PC-9 (cell line): ENCODE measurements at regions of chr20 and their contacts with region 1.

Region 1: DNA sequence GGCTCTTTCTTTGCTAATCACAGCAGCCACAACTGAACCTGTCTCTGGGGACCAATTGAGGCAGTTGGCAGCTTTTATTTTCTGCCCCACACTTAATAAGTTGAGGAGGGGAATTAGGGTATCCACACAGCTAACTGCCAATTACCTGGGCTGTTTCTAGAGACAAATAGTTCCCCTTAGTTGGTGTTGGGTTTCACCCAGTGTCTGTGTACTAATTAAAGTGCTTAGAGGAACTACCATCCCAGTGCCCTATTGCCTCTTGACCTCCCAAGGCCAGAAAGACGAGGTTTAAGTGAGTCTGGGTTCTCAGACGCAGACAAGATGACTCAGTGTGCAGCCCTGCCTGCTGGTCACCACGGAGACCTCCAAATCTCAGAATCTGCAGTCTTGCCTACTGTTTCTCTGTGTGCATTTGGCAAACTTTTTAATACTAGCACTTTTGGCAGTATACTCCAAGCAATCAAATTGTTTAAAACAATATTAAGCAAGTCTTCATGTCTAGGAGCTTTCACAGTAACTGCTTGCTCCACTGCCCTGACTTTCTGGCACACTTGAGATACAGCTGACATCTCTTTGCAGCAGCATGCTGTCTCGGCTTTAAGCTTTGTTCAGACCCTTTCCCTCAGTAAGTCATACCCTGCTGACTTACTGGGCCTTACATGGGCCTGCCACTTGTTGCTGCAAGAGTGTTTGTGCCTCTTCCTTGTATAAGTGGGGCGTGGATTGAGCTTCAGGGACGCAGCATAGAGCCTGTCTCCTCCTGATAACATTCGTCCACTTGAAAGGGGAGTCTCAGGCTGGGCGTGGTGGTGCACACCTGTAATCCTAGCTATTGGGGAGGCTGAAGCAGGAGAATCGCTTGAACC is 31.9 kb downstream of the STK35 start:
- DNase-seq: peak; percentile 56 to 81
- H3K4me3 ChIP-seq: peak overlapping the region; percentile 47; the same call in 1 of the 2 replicates
- H3K27ac ChIP-seq: peak overlapping the region; percentile 73
- H3K4me1 ChIP-seq: peaks cover 53% of the 10 kb centered on the region
- H3K27me3 ChIP-seq: no peaks in the 10 kb centered on the region
- CTCF ChIP-seq: no peak

Region 2: GRCh38 chr20:2109425-2110210 is 23.9 kb before region 1 on chr20:
- CTCF ChIA-PET with region 1: no interaction called
- POLR2A ChIA-PET with region 1: no interaction called
- intact Hi-C with region 1: loop called (anchors 2 kb)
- DNase-seq: no peak
- H3K4me3 ChIP-seq: no peak overlapping the region
- H3K27ac ChIP-seq: peak overlapping the region; percentile 61
- H3K4me1 ChIP-seq: peaks cover 47% of the 10 kb centered on the region
- H3K27me3 ChIP-seq: no peaks in the 10 kb centered on the region
- CTCF ChIP-seq: no peak

Region 3: DNA sequence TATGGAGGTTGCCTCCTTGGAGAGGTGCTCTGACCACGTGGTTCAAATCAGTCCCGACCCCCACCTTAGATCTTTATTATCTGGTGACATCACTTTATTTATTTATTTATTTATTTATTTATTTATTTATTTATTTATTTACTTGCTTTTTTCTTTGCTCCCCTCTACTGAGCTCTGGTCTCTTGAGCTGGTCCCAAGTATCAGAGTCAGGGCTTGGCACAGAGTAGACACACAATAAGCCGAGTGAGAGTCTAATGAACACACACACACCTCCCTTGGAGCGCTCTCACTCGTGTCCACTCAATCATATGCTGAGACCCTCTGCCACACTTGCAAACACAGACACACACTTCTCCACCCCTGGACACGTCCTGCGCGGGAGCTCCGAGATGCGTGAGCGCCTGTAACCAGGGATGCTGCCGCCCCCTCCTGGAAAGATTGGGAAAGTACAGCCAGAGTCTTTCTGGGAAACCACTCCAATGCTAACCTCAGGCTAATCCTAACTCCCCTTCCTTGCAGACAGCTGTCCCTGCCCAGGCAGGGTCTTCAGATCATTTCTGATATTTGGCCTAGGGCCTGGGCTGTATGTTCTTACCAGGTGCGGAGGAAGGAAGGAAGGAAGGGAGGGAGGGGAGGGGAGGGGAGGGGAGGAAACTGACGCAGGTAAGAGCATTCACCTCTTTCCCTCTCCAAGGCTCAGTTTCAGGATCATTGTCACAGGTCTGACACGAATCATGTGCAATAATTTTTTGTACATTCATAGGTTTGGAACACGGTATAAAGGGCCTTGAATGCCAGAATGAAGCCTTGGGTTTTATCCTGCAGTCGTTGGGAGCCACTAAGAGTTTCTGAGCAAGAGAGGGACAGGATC is 39.0 kb after region 1 on chr20:
- CTCF ChIA-PET with region 1: no interaction called
- POLR2A ChIA-PET with region 1: no interaction called
- intact Hi-C with region 1: no loop called
- DNase-seq: peak in 1 of 2 experiments; percentile 63
- H3K4me3 ChIP-seq: no peak overlapping the region
- H3K27ac ChIP-seq: no peak overlapping the region
- H3K4me1 ChIP-seq: no peaks in the 10 kb centered on the region
- H3K27me3 ChIP-seq: peaks cover 11% of the 10 kb centered on the region; the same call in 1 of the 2 replicates
- CTCF ChIP-seq: peak; percentile 97